ENCODE measurements at regions of chr9 and their contacts with region 1.

Region 1: DNA sequence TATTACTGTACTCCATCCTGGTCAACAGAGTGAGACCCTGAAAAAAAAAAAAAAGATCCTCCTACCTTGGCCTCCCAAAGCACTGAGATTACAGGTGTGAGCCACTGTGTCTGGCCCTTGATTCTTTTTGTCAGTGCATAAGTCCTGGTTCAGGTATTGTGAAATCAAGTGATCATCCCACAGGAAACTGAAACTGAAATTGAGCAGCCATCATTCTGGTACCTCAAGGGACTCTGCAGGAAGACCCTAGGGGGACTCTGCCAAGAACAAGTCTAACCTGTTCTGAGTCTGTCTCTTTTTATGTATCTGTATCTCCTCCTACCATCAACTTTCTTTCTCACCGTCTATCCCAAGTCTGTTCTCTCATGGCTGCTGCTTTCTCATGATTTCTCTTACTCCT is 1.9 kb upstream of the DCAF10 start:
- DNase-seq: no peak
- H3K4me3 ChIP-seq: no peak overlapping the region
- CTCF ChIP-seq: no peak

Region 2: DNA sequence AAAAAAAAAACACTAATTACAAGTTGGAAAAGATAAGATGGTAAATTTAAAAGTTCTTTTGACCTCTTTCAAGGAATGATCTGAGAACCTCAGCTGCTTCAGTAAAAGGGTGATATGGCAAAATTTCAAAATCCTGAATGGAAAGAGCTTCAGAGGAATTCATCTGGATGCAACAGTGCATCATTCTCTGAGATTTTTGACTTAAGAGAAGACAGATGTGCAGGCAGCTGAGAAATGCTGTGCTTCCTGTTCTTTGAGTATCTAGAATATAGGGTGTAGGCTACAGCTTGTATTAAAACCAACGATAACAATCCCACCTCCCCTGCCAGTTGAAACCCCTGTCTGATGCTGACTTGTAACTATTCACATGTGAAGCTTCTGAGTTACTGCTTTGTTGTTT is 141.8 kb before region 1 on chr9:
- in situ Hi-C with region 1: no loop called
- DNase-seq: no peak
- H3K4me3 ChIP-seq: no peak overlapping the region
- CTCF ChIP-seq: no peak

Region 3: DNA sequence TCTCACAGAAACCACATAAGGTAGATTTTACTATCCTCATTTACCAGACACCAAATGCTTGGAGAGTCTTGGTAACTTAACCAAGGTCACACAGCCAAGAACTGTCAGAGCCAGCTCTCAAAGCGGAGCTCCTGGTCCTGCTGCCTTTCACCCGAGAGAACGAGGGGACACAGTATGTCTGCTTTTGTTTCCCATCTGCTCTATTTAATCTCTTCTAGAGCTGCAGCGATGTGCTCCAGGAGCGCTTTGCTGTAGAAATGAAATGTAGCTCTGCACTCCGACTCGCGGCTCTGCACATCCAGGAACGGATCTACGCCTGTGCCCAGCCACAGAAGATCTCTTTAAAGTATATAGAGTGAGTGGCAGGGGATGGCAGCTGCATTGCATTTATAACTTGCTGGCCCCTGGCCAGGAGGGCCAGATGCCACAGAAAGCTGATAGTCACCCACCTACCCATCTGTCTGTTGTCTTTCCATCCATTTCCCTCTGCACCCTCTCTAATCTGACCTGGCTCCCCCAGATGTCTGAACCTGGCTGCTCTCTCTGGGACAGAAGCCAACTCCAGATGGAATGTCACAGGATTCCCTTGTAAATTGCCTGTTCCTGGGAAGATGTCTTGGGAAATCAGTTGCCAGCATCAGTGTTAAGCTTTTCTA is 66.5 kb before region 1 on chr9:
- in situ Hi-C with region 1: loop called (anchors 10 kb)
- DNase-seq: no peak
- H3K4me3 ChIP-seq: no peak overlapping the region
- CTCF ChIP-seq: no peak

Region 4: DNA sequence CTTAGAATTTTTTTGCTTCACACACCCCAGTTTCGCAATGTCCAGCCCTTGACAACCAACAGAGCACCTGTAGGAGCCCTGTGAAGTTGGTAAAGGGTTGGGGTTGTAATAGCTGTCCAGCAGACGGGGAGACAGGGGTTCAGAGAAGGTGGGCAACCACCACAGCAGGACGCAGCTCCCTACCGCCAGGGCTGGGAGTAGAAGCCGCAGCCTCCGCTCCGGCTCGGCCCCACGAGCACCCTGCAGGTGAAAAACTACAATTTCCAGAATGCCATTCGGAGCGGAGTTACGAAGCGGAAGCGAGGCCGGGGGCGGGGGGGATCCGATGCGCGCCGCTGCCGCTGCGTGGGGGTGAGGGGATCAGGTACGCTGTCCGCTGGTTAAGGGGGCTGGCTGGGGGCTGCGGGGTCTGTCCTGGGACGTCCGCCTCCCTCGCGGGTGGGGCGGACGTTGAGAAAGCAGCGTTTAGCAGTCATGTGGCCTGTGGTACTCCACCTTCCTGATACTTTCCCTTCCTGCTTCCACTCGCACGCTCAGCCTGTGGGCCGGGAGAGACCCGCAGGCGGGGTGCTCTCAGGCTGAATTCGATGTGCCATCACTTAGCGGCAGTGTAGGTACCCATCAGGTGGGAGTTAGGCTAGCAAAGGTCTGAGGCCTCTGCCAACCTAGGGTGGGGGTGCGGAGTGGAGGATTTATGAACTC is 45.1 kb before region 1 on chr9 and contains the start of gene TRMT10B:
- in situ Hi-C with region 1: no loop called
- DNase-seq: peak; percentile 15
- H3K4me3 ChIP-seq: peak within 1 kb of the TSS; percentile 84
- CTCF ChIP-seq: no peak

Region 5: DNA sequence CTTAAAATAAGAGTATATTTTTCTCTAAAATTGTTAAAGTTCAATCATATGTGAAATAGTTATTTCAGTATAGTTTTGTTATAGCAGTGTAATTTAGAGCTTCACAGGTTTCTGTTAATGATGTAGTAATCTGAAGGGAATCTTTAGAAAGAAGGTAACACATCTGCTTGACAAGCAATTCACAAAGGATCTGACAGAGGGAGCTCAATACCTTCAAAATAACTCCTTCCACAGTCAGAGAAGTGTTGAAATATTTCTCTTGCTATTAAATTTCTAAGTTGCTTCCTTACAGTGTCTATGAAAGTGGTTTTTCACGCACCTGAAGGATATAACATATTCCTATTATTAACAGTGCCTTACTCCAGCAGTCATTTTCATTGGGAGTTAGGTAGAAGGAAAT is 60.4 kb after region 1 on chr9:
- in situ Hi-C with region 1: loop called (anchors 10 kb)
- DNase-seq: no peak
- H3K4me3 ChIP-seq: no peak overlapping the region
- CTCF ChIP-seq: peak; percentile 16

Measured in astrocyte of the cerebellum (primary cell).